ENCODE measurements at regions of chr2 and their contacts with region 1.

Region 1: GRCh38 chr2:219278655-219279516 is at the start of gene DNAJB2:
- DNase-seq: peak; percentile 95
- H3K4me3 ChIP-seq: peak within 1 kb of the TSS; percentile 56
- H3K27me3 ChIP-seq: no peaks in the 10 kb centered on the region
- CTCF ChIP-seq: no peak
- polyA plus RNA-seq, gene DNAJB2: 45.0 and 57.3 TPM in 2 replicates

Region 2: GRCh38 chr2:219002395-219003266 is 276.3 kb before region 1 on chr2:
- CTCF ChIA-PET with region 1: no interaction called
- POLR2A ChIA-PET with region 1: no interaction called
- DNase-seq: no peak
- H3K4me3 ChIP-seq: no peak overlapping the region
- H3K27me3 ChIP-seq: peaks cover 59% of the 10 kb centered on the region
- CTCF ChIP-seq: peak; percentile 42

Region 3: DNA sequence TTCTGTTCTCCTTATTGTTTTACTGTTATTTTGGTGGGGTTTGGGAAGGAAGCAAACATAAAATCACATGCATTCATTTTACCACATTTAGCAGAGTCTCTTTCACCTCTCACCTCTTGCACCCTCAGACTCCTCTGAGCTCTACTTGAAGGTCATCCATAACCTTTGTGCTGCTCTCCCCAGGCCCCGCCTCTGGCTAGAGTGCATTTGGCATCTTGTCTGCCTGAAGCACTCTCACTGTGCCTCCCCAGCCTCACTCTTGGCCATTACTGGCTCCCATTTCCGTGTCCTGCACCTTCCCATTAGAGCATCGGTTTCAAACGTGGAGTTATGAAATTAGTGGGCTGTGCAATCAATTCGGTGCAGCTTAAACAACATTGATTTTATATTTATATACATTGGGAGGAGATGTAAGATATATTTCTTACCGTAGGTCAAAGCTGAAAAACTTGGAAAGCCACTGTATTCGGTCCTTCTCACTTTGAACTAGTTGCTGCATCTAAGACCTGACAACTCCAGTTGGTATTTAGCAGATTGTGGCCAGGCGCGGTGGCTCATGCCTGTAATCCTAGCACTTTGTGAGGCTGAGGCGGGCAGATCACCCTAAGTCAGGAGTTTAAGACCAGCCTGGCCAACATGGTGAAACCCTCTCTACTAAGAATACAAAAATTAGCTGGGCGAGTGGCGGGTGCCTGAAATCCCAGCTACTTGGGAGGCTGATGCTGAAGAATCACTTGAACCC is 79.2 kb before region 1 on chr2:
- CTCF ChIA-PET with region 1: no interaction called
- POLR2A ChIA-PET with region 1: no interaction called
- DNase-seq: no peak
- H3K4me3 ChIP-seq: no peak overlapping the region
- H3K27me3 ChIP-seq: no peaks in the 10 kb centered on the region
- CTCF ChIP-seq: no peak

Region 4: DNA sequence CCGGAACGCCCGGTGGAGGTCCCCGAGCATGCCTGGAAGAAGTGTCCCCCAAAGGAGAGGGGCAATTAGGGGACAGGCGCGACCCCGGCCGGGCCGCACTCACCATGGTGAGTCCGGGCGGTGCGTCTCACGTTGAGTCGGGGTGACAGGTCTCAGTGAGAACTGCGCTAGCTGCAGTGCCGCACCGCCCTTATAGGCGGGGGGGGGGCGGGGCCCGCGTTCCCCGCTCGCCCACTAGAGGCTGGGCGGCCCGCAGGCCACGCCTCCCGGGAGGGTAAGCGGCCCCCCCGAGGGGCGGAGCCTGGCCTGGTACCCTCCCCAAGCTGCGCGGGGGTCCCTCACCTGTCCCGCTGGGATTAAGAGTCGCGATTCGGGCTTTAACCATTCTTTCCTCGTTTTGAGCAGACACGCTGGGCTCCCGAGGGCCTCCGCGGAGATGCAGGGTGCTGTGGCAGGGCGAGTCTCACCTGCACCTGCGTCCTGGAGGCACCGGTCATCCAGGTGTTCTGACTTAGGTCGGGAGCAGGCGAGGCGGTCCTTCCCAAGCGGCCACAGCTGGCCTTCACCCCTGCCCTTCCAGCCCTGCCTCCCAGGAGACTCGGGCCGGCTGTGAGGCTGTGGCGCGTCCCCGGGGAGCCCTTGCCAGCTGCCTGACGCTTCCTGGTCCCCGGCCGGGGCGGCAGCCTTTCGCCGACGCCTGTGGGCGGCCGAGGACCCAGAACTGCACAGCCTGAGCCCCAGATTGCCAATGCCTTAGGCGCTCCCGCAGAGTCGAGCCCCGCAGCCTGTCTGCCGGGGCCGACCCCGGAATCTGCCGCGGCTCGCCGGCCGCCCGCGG is 24.9 kb before region 1 on chr2 and contains the start of gene TUBA4A:
- CTCF ChIA-PET with region 1: interaction called, 61 read pairs
- POLR2A ChIA-PET with region 1: interaction called, 7 read pairs
- DNase-seq: no peak
- H3K4me3 ChIP-seq: peak within 1 kb of the TSS; percentile 52
- H3K27me3 ChIP-seq: peaks cover 5% of the 10 kb centered on the region
- CTCF ChIP-seq: peak; percentile 4; the same call in 1 of the 2 replicates
- polyA plus RNA-seq, gene TUBA4A: 16.8 and 23.0 TPM in 2 replicates

Region 5: GRCh38 chr2:219261024-219261855 is 17.6 kb before region 1 on chr2:
- CTCF ChIA-PET with region 1: interaction called, 61 read pairs
- POLR2A ChIA-PET with region 1: no interaction called
- DNase-seq: no peak
- H3K4me3 ChIP-seq: no peak overlapping the region
- H3K27me3 ChIP-seq: peaks cover 9% of the 10 kb centered on the region
- CTCF ChIP-seq: no peak

Region 6: GRCh38 chr2:219331560-219332213 is 52.8 kb after region 1 on chr2:
- CTCF ChIA-PET with region 1: no interaction called
- POLR2A ChIA-PET with region 1: no interaction called
- DNase-seq: no peak
- H3K4me3 ChIP-seq: no peak overlapping the region
- H3K27me3 ChIP-seq: peaks cover 27% of the 10 kb centered on the region
- CTCF ChIP-seq: no peak